ENCODE measurements at regions of chr7 and their contacts with region 1.

Region 1: DNA sequence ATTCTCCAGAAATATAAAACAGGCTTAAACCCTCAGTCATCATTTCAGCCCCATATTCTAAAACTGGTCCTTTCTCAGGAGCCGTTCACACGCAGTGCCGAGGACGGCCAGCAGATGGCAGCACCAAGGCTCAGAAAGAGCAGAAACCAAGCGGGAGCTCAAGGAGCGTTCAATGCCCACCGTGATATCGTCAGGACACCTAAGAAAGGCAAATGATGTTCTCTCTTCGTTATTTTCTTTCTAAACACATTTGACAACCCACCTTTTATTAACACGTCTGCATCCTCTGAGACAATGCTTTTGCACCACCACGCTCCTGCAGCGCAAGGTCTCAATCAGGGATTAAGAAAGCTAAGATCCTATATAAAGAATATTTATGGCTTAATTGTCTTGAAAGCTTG is 45.7 kb upstream of the RBM33 start:
- DNase-seq: peak; percentile 87
- ATAC-seq: peak; percentile 88
- H3K4me3 Mint-ChIP-seq: no peak overlapping the region
- H3K27ac Mint-ChIP-seq: no peak overlapping the region
- H3K4me1 Mint-ChIP-seq: peaks cover 7% of the 10 kb centered on the region
- H3K27me3 Mint-ChIP-seq: peaks cover 58% of the 10 kb centered on the region

Region 2: GRCh38 chr7:155644178-155644970 is 45.6 kb after region 1 on chr7 and contains the start of gene RBM33:
- CTCF ChIA-PET with region 1: interaction called, 16 read pairs
- DNase-seq: peak; percentile 85
- ATAC-seq: peak; percentile 84
- H3K4me3 Mint-ChIP-seq: peak within 1 kb of the TSS; percentile 86
- H3K27ac Mint-ChIP-seq: peak within 1 kb of the TSS; percentile 98
- H3K4me1 Mint-ChIP-seq: peaks cover 42% of the 10 kb centered on the region
- H3K27me3 Mint-ChIP-seq: no peaks in the 10 kb centered on the region
- total RNA-seq, gene RBM33: 75.6 to 102 TPM

Region 3: DNA sequence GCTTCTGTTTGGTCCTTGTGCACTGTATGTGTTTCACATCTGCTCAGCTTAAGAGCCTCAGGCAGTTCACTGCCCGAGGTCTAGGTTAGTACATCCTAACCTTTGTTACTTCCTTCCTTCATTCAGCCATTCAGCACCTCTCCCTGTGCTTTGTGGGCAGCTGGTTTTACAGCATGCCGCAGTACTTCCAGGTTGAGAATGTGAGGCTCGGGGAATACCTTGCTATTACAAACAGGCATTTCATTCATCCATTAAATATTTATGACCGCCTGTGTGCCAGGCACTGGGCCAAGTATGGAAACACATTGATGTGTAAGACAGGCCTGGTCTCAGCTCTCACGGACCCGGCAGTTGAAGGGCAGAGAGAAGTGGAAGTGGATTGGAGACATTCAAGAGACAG is 131.0 kb after region 1 on chr7:
- CTCF ChIA-PET with region 1: interaction called, 35 read pairs
- DNase-seq: no peak
- ATAC-seq: no peak
- H3K4me3 Mint-ChIP-seq: no peak overlapping the region
- H3K27ac Mint-ChIP-seq: peak overlapping the region; percentile 48
- H3K4me1 Mint-ChIP-seq: peaks cover 23% of the 10 kb centered on the region
- H3K27me3 Mint-ChIP-seq: no peaks in the 10 kb centered on the region

Region 4: GRCh38 chr7:155763691-155764437 is 165.1 kb after region 1 on chr7:
- CTCF ChIA-PET with region 1: interaction called, 116 read pairs
- DNase-seq: peak; percentile 86
- ATAC-seq: peak; percentile 85
- H3K4me3 Mint-ChIP-seq: peak overlapping the region; percentile 54
- H3K27ac Mint-ChIP-seq: peak overlapping the region; percentile 93
- H3K4me1 Mint-ChIP-seq: peaks cover 62% of the 10 kb centered on the region
- H3K27me3 Mint-ChIP-seq: no peaks in the 10 kb centered on the region

Measured in activated CD8-positive, alpha-beta memory T cell treated with anti-CD3 and anti-CD28 coated beads, Interleukin-2, amount 10 ng/mL, durations not matched to agents 7 days and 5 days (primary cell).